CD14-positive monocyte (primary cell): ENCODE measurements at regions of chr7 and their contacts with region 1.

Region 1: GRCh38 chr7:73954181-73954580 is 73.8 kb upstream of the ELN start:
- DNase-seq: no peak
- H3K4me3 ChIP-seq: no peak overlapping the region
- H3K4me3 Mint-ChIP-seq: no peak overlapping the region
- H3K27ac ChIP-seq: no peak overlapping the region
- H3K27ac Mint-ChIP-seq: no peak overlapping the region
- H3K4me1 ChIP-seq: peaks cover 4 to 8% of the 10 kb centered on the region in 2 donors
- H3K4me1 Mint-ChIP-seq: peaks cover 9% of the 10 kb centered on the region
- H3K27me3 ChIP-seq: no peaks in the 10 kb centered on the region
- H3K27me3 Mint-ChIP-seq: peaks cover 4 to 8% (median 7%) of the 10 kb centered on the region in 3 donors
- CTCF ChIP-seq: no peak

Region 2: GRCh38 chr7:73894733-73895551 is 59.2 kb before region 1 on chr7:
- intact Hi-C with region 1: loop called in 1 of 2 experiments (anchors 10 kb)
- DNase-seq: no peak
- H3K4me3 ChIP-seq: no peak overlapping the region
- H3K4me3 Mint-ChIP-seq: no peak overlapping the region
- H3K27ac ChIP-seq: no peak overlapping the region
- H3K27ac Mint-ChIP-seq: no peak overlapping the region
- H3K4me1 ChIP-seq: peaks cover 0 to 7% of the 10 kb centered on the region in 2 donors
- H3K4me1 Mint-ChIP-seq: peaks cover 12% of the 10 kb centered on the region
- H3K27me3 ChIP-seq: no peaks in the 10 kb centered on the region
- H3K27me3 Mint-ChIP-seq: peaks cover 4 to 12% (median 9%) of the 10 kb centered on the region in 3 donors
- CTCF ChIP-seq: no peak